GM18951 (cell line): ENCODE measurements at regions of chr16 and their contacts with region 1.

Region 1: DNA sequence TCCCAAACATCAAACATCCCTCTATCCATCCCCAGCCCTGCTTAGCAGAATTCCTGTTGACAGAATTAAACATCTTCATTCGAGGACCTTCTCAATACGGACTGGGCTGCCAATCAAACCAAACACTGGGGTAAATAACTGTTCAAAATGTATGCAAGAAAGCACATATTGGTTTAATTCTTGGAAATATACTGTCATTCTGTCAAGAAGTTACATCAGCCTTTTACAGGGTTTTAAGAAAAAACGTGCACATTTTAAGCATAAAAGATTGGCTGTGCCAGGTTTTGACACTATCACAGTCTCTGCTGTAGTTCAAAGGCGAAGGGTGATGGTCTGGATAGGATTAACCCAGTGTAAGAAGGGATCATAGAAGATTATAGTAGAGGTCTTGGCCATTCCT is 25.1 kb upstream of the CCNF start:
- POLR2A ChIP-seq: no peak

Region 2: DNA sequence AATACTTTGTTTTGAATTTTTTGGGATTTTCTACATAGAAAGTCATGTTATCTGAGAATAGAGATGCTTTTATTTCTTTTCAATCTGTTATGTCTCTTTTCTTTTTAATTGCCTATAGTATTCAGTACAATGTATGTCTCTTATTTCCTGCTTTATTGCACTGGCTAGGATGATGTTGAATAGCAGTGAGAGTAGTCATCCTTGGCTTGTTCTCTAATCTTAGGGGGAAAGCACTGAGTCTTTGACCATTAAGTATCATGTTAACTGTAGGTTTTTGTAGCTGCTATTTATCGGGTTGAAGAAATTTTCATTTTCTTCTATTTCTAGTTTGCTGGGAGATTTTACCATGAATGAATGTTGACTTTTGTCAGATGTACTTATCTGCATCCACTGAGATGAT is 53.6 kb before region 1 on chr16:
- in situ Hi-C with region 1: loop called (anchors 10 kb)
- POLR2A ChIP-seq: no peak

Region 3: DNA sequence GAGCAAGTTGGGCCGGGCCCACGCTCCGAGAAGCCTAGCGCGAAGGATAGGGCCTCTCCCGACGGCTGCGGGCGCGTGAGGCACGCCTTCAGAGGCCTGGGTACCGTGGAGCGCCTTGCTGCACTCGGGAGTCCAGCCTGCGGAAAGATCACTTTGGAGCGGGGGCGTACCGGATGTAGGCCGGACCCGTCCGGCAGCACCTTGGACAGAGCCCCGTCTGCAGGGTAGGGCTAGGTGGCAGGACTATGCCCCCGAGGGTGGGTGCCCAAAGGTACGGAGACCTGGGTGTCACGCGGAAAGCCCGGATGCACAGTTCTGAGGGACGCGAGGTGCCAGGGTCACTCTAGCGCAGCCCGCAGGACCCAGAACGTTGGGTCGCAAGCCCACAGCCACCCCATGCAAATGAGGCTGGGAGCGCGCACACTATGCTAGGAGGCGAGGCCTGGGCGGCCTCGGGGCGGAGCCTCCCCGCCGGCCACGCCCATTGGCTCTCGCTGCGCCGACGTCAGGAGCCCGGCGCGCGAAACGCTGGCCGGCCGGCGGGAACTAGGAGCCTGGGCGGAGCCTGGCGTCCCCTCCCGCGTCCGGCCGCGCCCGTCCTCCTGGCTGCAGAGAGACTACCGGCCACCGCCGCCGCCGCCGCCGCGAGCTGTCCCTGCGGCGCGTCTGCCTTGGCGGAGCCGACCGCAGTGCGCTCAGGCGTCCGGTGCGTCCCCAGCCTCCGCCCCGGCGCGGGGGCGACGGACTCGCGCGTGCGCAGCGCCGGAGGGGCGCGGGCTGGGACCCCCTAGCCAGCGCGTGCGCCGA is 564.8 kb after region 1 on chr16 and contains the start of gene PAQR4:
- in situ Hi-C with region 1: no loop called
- POLR2A ChIP-seq: peak; percentile 62